GM10248 (cell line): ENCODE measurements at regions of chr1 and their contacts with region 1.

Region 1: DNA sequence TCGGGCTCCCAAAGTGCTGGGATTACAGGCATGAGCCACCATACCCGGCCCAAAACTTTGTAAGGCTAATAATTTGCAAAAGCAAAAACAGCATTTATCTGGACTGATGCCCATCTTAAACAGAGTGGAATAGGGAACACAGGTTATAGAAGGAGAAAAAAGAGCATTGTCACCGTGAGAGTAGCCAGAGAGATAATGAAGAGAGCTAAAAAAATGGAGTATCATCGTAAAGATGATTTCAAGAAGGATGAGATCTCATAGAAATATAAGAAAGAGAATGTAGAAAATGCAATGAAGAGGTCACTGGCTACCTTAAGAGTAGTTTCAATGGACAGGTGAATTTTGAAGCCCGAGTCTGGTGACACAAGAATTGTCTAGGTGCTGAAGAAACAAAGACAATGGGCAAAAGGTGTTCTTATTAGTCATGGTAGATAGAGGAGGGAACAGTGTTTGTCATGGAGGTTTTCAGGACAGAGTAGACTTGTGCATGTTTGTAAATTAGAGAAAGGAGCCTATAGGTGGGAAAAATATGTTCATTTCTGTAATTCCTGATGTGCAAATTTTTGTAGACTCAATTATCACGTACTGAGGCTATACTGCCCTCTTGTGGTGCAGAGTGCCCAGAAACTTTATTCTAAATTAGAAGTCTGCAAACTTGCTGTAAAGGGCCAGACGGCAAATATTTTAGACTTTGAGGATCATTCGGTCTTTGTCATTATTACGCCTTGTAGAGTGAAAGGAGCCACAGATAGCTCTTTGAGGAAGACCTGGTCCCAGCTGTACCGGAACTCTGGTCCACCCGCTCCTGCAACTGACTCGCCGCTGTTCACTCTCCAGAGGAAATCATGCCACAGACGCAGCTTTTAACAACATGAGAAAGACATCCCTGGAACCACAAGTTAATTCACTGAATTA is 8.1 kb upstream of the TMEM183A start:
- DNase-seq: peak; percentile 49
- CTCF ChIP-seq: peak; percentile 76

Region 2: DNA sequence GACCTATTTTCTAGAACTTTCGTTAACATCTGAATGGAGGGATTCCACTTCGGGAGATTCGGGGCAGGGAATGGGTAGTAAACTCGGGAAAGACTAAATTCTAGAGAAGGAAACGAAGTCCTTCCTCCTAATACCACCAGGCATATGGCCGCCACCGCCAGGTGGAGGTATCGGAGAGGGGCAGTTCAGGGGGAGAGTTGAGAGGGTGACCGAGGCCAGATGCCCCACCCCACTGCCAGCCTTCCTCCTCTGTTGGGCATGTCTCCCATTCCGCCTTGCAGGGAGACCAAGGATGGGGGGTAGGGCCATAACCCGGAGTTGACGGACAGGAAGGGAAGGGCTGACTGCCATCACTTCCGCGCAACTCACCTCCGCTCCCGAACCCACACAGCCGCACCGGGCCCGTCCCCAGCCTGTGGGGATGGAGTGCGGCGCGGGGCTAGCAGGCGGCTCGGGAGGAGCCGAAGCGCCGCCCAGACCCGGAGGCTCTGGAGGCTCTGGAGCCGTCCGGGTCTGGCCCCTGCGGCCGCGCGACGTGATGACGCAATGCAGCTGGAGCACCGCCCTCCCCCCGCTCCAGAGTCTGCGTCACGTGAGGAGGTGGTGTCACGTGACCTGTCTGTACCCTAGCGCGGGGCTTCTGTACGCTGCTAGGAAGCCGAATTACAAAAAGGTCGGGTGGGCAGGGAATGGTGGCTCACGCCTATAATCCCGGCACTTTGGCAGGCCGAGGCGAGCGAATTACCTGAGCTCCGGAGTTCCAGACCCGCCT is 72.2 kb before region 1 on chr1 and contains the start of gene KLHL12:
- CTCF ChIA-PET with region 1: interaction called, 10 read pairs
- POLR2A ChIA-PET with region 1: no interaction called
- DNase-seq: peak; percentile 98
- CTCF ChIP-seq: peak; percentile 59

Region 3: GRCh38 chr1:202987922-202988583 is 11.0 kb before region 1 on chr1:
- CTCF ChIA-PET with region 1: interaction called, 55 read pairs
- POLR2A ChIA-PET with region 1: no interaction called
- DNase-seq: no peak
- CTCF ChIP-seq: no peak